ENCODE measurements at regions of chr10 and their contacts with region 1.

Region 1: DNA sequence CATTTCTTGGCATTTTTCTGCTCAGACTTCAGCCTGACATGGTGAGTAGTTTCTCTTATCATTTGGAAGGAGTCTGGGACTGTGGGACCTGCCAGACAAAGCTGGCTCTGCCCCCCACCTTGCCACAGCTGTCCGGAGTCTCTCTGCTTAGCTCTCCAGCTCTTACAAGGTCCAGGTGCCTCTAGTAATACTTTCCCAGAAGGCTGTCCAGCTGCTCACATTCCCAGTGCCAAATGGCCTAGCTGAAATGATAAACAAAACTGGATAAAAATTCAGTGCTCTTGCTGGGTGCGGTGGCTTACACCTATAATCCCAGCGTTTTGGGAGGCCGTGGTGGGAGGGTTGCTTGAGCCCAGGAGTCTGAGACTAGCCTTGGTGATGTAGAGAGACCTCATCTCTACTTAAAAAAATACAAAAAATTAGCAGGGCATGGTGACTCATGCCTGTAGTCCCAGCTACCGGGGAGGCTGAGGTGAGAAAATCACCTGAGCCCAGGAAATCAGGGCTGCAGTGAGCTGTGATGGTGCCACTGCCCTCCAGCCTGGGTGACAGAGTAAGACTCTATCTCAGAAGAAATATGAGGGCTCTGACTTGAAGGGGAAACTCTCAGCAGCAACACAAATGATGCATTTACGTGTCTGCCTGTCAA is 86.8 kb downstream of the C10orf90 start:
- DNase-seq: peak in 1 of 5 donors; percentile 32
- ATAC-seq: peak in 2 of 4 donors; percentile 33 to 56
- H3K4me3 ChIP-seq: no peak overlapping the region
- H3K27ac ChIP-seq: no peak overlapping the region
- H3K4me1 ChIP-seq: no peaks in the 10 kb centered on the region
- H3K27me3 ChIP-seq: peaks cover 0 to 6% (median 0%) of the 10 kb centered on the region in 9 donors
- CTCF ChIP-seq: no peak
- POLR2A ChIP-seq: no peak

Region 2: DNA sequence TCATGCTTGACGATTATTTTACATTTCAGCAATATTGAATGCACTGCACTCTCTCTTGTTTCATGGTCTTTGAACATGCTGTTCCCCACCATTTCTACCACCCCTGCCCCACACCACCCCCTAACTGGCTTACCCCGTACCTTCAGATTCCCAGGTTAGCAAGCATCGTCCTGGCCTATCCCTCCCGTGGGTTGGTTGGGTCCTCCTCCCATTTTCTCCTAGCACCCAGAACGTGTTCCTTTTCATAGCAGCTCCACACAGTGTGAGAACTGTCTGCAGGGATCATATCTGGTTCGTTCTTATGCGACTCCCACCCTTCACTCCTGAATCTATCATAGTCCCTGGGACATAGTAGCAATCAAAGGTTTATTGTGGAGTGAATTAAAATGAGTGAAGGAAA is 38.2 kb after region 1 on chr10:
- intact Hi-C with region 1: loop called in 1 of 10 experiments (anchors 2 kb)
- DNase-seq: no peak
- ATAC-seq: no peak
- H3K4me3 ChIP-seq: no peak overlapping the region
- H3K27ac ChIP-seq: no peak overlapping the region
- H3K4me1 ChIP-seq: peaks cover 0 to 5% (median 0%) of the 10 kb centered on the region in 12 donors
- H3K27me3 ChIP-seq: no peaks in the 10 kb centered on the region
- CTCF ChIP-seq: no peak
- POLR2A ChIP-seq: no peak

Measured in heart left ventricle (tissue), 16 donors.